Upper lobe of right lung (tissue), 1 donor: ENCODE measurements at regions of chr5 and their contacts with region 1.

Region 1: DNA sequence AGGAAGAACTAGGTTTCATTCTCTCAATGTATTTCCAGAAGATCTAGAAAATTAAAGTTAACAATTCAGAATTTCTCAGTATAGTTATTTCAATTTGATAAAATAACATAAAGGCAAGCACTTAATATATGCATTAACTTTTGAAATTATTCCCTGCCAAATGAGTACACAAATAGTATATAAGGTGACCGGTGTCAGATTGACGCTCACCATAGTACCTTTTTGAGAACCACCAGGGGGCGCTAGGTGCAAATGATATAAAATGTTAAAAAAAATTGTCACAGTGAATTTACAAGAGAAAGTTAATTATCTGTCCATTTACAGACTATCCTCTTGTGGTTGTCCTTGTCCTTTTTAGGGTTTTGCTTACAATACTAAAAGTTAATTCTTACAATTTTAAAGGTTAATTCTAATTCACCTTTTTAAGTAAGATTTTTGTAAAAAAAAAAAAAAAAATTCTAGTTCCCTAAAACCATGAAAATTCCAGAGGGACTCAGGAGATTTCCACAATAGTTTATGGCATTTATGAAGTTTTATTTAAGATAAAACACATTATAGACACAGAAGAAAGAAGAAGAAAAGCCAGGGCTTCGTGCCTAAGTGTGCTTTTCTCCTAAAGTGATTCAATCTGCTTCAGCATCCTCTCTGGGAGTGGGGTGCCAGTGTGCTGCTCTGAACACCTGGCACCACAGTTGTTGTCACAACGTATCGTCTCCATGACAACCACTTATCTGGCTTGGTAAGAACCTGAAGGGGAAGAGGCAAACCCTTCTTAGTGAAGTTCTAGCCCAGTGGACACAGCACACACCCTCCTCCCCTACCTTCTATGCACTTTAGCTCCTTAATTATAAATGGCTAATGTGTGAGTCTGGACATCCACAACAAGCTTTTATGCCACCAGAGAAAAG is 1.7 kb downstream of the ADAMTS16 start:
- DNase-seq: no peak
- ATAC-seq: peak; percentile 69
- H3K4me3 ChIP-seq: no peak overlapping the region
- H3K27ac ChIP-seq: no peak overlapping the region
- H3K4me1 ChIP-seq: peaks cover 10% of the 10 kb centered on the region
- H3K27me3 ChIP-seq: peaks cover 25% of the 10 kb centered on the region
- CTCF ChIP-seq: peak; percentile 83

Region 2: GRCh38 chr5:5278815-5279381 is 137.0 kb after region 1 on chr5:
- intact Hi-C with region 1: no loop called
- DNase-seq: no peak
- ATAC-seq: no peak
- H3K4me3 ChIP-seq: no peak overlapping the region
- H3K27ac ChIP-seq: no peak overlapping the region
- H3K4me1 ChIP-seq: no peaks in the 10 kb centered on the region
- H3K27me3 ChIP-seq: no peaks in the 10 kb centered on the region
- CTCF ChIP-seq: no peak

Region 3: DNA sequence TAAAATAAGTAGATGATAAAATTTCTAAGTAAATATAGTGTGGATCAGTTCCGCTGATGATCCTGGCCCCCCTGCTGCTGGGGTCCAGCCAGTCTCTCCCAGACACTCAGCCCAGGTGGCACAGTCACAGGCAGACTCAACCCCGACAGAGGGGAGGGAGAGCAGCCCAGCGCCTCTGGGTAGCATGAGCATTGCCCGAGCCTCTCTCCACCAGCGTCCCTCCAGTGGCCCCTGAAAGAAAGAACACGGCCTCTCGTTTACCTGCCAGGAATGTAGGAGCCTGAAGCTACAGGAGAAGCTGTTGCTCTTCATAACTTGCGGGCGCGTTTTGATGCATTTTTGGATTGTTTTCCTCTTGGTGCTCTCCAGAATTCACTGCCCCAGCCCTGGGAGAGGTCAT is 211.8 kb after region 1 on chr5:
- intact Hi-C with region 1: no loop called
- DNase-seq: no peak
- ATAC-seq: no peak
- H3K4me3 ChIP-seq: no peak overlapping the region
- H3K27ac ChIP-seq: no peak overlapping the region
- H3K4me1 ChIP-seq: no peaks in the 10 kb centered on the region
- H3K27me3 ChIP-seq: no peaks in the 10 kb centered on the region
- CTCF ChIP-seq: no peak

Region 4: DNA sequence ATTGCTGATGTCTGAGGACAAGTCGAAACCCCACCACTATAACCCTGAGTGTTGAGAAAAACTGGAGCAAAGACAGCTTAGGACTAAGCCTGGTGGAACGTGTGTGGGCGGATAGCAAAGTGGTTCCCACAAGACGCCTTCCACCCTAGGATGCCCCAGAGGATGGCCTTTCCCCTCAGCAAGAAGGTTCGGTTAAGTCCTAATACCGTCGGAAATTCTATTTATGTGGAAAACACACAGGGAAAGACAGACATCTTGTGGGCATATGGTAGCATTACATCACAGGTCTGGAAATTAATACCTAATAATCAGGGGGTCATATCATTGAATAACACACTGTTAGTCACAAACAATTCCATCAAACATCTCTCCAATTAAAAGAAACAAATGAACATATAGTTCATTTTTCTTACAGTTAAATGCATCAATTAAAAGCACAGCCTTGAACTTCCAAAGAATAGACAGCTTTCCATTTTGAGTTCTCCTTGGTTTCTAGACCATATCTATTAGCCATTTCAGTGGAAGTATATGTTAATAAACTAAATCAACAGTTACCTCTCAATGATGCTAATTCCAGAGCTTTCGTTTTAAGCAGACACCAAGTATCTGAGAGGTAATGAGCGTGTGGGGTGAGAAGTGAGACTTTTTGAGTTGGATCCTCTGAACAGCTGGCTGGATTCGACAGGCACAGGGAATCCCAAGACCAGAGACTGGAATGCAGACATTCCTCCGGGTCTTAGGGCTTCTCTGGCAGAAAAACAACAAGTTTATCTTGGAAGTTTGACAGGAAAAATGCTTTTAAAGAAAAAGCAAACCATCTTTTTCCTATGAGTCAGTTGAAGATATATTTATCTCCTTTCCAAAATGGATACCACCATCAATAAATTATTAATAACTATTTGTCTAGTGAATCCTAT is 277.7 kb after region 1 on chr5:
- intact Hi-C with region 1: loop called (anchors 10 kb)
- DNase-seq: no peak
- ATAC-seq: no peak
- H3K4me3 ChIP-seq: no peak overlapping the region
- H3K27ac ChIP-seq: no peak overlapping the region
- H3K4me1 ChIP-seq: peaks cover 31% of the 10 kb centered on the region
- H3K27me3 ChIP-seq: no peaks in the 10 kb centered on the region
- CTCF ChIP-seq: peak; percentile 72